SK-N-SH (cell line): ENCODE measurements at regions of chr2 and their contacts with region 1.

Region 1: GRCh38 chr2:68467077-68467960 is at the starts of genes APLF and FBXO48:
- DNase-seq: peak; percentile 95
- H3K4me3 ChIP-seq: peak within 1 kb of the TSS; percentile 88 to 98
- H3K27ac ChIP-seq: peak within 1 kb of the TSS; percentile 72 to 86
- H3K4me1 ChIP-seq: peaks cover 0 to 12% of the 10 kb centered on the region in 2 experiments; a peak in 2 of 4 replicates
- H3K27me3 ChIP-seq: no peaks in the 10 kb centered on the region
- CTCF ChIP-seq: no peak
- EP300 ChIP-seq: no peak
- RAD21 ChIP-seq: no peak
- polyA plus RNA-seq, gene APLF: 1.1 and 1.3 TPM in 2 replicates
- polyA plus RNA-seq, gene FBXO48: 0.30 and 0.45 TPM in 2 replicates

Region 2: DNA sequence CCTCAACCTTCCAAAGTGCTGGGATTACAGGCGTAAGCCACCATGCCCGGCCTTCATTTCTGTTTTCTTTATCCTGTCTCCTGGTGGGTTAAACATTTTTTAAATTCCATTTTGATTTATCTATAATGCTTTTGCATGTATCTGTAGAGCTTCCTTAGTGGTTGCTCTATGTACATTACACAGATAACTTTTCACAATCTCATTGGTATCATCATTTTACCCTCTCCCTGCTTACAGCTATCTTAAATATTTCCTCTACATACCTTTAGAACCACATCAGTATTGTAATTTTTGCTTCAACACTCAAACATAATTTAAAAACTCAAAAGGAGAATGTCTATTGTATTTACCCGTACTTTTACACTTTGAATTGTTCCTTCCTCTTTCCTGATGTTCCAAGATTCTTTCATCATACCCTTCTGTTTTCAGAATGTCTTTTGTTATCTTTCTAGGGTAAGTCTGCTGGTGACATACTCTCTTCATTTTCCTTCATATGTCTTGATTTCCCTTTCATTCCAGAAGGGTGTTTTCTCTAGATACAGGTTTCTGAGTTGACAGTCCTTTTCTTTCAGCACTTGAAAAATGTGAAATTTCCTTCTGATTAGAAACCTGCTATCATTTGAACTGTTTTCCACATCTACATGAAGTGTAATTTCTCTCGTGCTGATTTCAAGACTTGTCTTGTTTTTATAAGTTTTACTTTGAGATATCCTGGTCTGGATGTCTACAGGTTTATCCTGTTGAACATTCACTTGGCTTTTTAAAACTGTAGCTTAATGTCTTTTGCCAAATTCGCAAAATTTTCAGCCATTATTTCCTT is 236.9 kb before region 1 on chr2:
- CTCF ChIA-PET with region 1: no interaction called
- POLR2A ChIA-PET with region 1: no interaction called
- DNase-seq: no peak
- H3K4me3 ChIP-seq: no peak overlapping the region
- H3K27ac ChIP-seq: peak overlapping the region in 1 of 2 experiments; percentile 18; a peak in 2 of 4 replicates
- H3K4me1 ChIP-seq: peaks cover 15 to 17% of the 10 kb centered on the region in 2 experiments; a peak in 3 of 4 replicates
- H3K27me3 ChIP-seq: no peaks in the 10 kb centered on the region
- CTCF ChIP-seq: no peak
- EP300 ChIP-seq: no peak
- RAD21 ChIP-seq: no peak

Region 3: DNA sequence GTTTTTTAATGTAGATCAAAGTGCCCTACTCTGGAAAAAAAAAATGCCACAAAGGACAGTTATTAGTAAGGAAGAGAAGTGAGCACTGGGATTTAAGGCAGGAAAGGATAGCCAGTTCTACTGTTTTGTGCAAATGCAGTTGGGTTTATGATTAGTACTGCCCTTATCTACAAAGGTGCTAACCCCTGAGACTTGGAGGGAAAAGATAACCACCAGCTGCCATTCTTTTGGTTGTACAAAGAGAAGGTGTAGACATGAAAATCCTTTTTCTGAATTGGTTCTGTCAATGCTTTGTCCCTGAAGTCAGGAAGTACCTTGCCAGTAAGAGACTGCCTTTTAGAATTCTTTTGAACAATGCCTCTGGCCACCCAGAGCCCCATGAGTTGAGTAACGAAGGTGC is 11.4 kb after region 1 on chr2:
- CTCF ChIA-PET with region 1: interaction called, 16 read pairs
- POLR2A ChIA-PET with region 1: no interaction called
- DNase-seq: no peak
- H3K4me3 ChIP-seq: no peak overlapping the region
- H3K27ac ChIP-seq: no peak overlapping the region
- H3K4me1 ChIP-seq: no peaks in the 10 kb centered on the region; a peak in 1 of 4 replicates
- H3K27me3 ChIP-seq: no peaks in the 10 kb centered on the region
- CTCF ChIP-seq: no peak
- EP300 ChIP-seq: no peak
- RAD21 ChIP-seq: no peak

Region 4: DNA sequence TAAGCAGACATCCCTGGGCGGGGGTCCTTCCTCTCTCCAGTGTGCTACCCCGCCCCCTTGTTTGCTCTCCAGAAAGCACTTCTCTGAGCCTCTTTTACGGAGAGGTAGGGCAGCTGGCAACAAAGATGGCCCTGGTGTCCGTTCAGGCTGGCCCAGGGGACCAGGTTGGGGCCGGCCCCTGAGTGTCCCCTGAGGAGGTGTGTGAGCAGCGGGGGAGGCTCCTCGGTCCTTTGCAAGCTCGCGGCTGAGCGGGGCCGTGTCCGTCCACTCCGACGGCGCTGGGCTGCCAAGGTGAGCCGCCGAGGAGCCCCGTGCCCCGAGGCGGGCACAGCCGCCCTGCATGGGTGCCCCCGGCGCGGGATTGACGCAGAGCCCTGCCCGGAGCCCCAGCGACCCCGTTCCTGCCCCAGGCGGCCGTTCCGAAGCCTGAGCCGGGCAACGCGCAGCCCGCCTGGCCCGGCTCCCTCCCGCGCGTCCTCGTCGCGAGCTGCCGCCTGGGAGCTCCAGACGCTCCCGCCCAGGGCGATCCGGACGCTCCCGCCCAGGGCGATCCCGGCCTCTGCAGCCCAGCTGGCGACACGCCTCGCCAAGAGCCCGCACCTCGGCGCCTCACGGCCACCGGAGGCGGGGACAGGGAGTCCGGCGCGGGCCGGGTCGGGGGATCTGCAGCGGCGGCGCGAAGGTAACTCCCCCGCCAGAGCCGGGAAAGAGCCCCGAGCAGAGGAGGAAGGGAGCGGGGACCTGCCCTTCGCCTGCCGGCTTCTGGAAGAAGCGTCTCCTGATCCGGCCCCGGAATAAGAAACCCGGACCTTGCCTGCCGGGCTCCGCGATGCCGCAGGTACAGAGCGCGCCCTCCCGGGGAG is 175.9 kb after region 1 on chr2 and contains the start of gene PROKR1:
- CTCF ChIA-PET with region 1: interaction called, 19 read pairs
- POLR2A ChIA-PET with region 1: no interaction called
- DNase-seq: peak; percentile 78
- H3K4me3 ChIP-seq: peak within 1 kb of the TSS; percentile 49 to 54
- H3K27ac ChIP-seq: no peak within 1 kb of the TSS
- H3K4me1 ChIP-seq: no peaks in the 10 kb centered on the region; a peak in 1 of 4 replicates
- H3K27me3 ChIP-seq: peaks cover 41% of the 10 kb centered on the region
- CTCF ChIP-seq: no peak
- EP300 ChIP-seq: no peak
- RAD21 ChIP-seq: no peak; the same call in 1 of the 2 replicates
- polyA plus RNA-seq, gene PROKR1: not detected in 2 replicates

Region 5: GRCh38 chr2:68721482-68722101 is 254.3 kb after region 1 on chr2:
- CTCF ChIA-PET with region 1: interaction called, 54 read pairs
- POLR2A ChIA-PET with region 1: no interaction called
- DNase-seq: no peak
- H3K4me3 ChIP-seq: no peak overlapping the region
- H3K27ac ChIP-seq: no peak overlapping the region
- H3K4me1 ChIP-seq: peaks cover 0 to 4% of the 10 kb centered on the region in 2 experiments; a peak in 1 of 4 replicates
- H3K27me3 ChIP-seq: no peaks in the 10 kb centered on the region
- CTCF ChIP-seq: no peak
- EP300 ChIP-seq: no peak
- RAD21 ChIP-seq: no peak

Region 6: GRCh38 chr2:68925295-68925896 is 458.1 kb after region 1 on chr2:
- CTCF ChIA-PET with region 1: interaction called, 99 read pairs
- POLR2A ChIA-PET with region 1: no interaction called
- DNase-seq: peak; percentile 55
- H3K4me3 ChIP-seq: no peak overlapping the region; a peak in 1 of 4 replicates
- H3K27ac ChIP-seq: no peak overlapping the region
- H3K4me1 ChIP-seq: no peaks in the 10 kb centered on the region
- H3K27me3 ChIP-seq: no peaks in the 10 kb centered on the region; the same call in 1 of the 2 replicates
- CTCF ChIP-seq: peak; percentile 89
- EP300 ChIP-seq: no peak
- RAD21 ChIP-seq: peak; percentile 94